ENCODE measurements at regions of chr1 and their contacts with region 1.

Region 1: DNA sequence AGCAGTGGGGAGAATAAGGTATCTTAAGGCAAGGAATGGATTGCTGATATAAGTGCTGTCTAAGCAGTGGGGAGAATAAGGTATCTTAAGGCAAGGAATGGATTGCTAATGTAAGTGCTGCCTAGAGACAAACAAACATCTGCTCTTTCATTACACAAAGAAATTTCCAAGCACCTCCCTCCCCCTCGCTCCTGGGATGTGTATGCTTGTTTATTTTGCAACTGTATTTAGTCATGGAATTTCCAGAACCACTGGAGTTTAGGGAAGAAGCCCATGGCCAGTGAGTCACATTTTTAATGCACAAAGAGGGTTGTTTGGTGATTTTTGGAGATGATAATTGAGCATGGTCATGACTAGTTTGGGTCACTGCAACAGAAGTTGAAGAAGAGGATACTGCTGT is 21.5 kb downstream of the PDPN start:
- DNase-seq: peak; percentile 94
- H3K4me3 Mint-ChIP-seq: no peak overlapping the region
- H3K27ac Mint-ChIP-seq: peak overlapping the region; percentile 81
- H3K4me1 Mint-ChIP-seq: peaks cover 38% of the 10 kb centered on the region
- H3K27me3 Mint-ChIP-seq: no peaks in the 10 kb centered on the region
- CTCF ChIP-seq: no peak

Region 2: GRCh38 chr1:13583966-13584791 is 21.0 kb before region 1 on chr1:
- CTCF ChIA-PET with region 1: interaction called, 14 read pairs
- POLR2A ChIA-PET with region 1: interaction called, 40 read pairs
- intact Hi-C with region 1: no loop called
- DNase-seq: peak; percentile 52
- H3K4me3 Mint-ChIP-seq: peak overlapping the region; percentile 85
- H3K27ac Mint-ChIP-seq: peak overlapping the region; percentile 89
- H3K4me1 Mint-ChIP-seq: peaks cover 15% of the 10 kb centered on the region
- H3K27me3 Mint-ChIP-seq: no peaks in the 10 kb centered on the region
- CTCF ChIP-seq: no peak

Region 3: GRCh38 chr1:13593511-13594131 is 11.5 kb before region 1 on chr1:
- CTCF ChIA-PET with region 1: interaction called, 14 read pairs
- POLR2A ChIA-PET with region 1: interaction called, 40 read pairs
- intact Hi-C with region 1: no loop called
- DNase-seq: peak; percentile 83
- H3K4me3 Mint-ChIP-seq: peak overlapping the region; percentile 38
- H3K27ac Mint-ChIP-seq: peak overlapping the region; percentile 87
- H3K4me1 Mint-ChIP-seq: peaks cover 61% of the 10 kb centered on the region
- H3K27me3 Mint-ChIP-seq: no peaks in the 10 kb centered on the region
- CTCF ChIP-seq: no peak

Region 4: GRCh38 chr1:14598497-14599172 is 993.5 kb after region 1 on chr1 and contains the start of gene KAZN:
- CTCF ChIA-PET with region 1: no interaction called
- POLR2A ChIA-PET with region 1: no interaction called
- intact Hi-C with region 1: no loop called
- DNase-seq: no peak
- H3K4me3 Mint-ChIP-seq: no peak within 1 kb of the TSS
- H3K27ac Mint-ChIP-seq: no peak within 1 kb of the TSS
- H3K4me1 Mint-ChIP-seq: no peaks in the 10 kb centered on the region
- H3K27me3 Mint-ChIP-seq: peaks cover 57% of the 10 kb centered on the region
- CTCF ChIP-seq: no peak
- total RNA-seq, gene KAZN: 3.3 and 4.2 TPM in 2 replicates

Measured in MCF 10A (cell line).